ENCODE measurements at regions of chr2 and their contacts with region 1.

Region 1: GRCh38 chr2:121539750-121540469 is 9.2 kb downstream of the RNU4ATAC start:
- DNase-seq: no peak
- ATAC-seq: no peak
- H3K4me3 ChIP-seq: no peak overlapping the region
- H3K27ac ChIP-seq: peak overlapping the region in 2 of 12 donors; percentile 7 to 42
- H3K4me1 ChIP-seq: peaks cover 0 to 77% (median 37%) of the 10 kb centered on the region in 12 donors
- H3K27me3 ChIP-seq: no peaks in the 10 kb centered on the region
- CTCF ChIP-seq: no peak
- POLR2A ChIP-seq: no peak

Region 2: DNA sequence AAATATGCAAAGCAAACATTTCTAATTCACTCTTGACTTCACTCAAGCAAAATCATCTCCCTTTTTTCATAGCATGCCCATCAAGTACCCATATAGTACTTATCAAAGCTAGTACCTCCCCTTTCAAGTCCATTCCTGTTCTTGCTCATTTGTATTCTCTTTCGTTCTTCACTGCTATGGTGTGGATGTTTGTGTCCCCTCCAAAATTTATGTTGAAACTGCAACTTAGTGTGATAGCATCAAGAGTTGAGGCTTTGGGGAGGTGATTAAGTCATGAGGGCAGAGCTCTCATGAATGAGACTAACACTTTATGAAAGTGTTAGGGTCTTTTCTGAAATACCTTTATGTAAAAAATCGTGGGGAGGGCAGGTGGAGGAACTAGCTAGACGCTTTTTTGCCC is 43.6 kb after region 1 on chr2:
- intact Hi-C with region 1: loop called in 2 of 10 experiments (anchors 5 to 10 kb)
- DNase-seq: no peak
- ATAC-seq: no peak
- H3K4me3 ChIP-seq: no peak overlapping the region
- H3K27ac ChIP-seq: no peak overlapping the region
- H3K4me1 ChIP-seq: peaks cover 4 to 52% (median 23%) of the 10 kb centered on the region in 12 donors
- H3K27me3 ChIP-seq: no peaks in the 10 kb centered on the region
- CTCF ChIP-seq: no peak
- POLR2A ChIP-seq: no peak